ENCODE measurements at regions of chr7 and their contacts with region 1.

Region 1: DNA sequence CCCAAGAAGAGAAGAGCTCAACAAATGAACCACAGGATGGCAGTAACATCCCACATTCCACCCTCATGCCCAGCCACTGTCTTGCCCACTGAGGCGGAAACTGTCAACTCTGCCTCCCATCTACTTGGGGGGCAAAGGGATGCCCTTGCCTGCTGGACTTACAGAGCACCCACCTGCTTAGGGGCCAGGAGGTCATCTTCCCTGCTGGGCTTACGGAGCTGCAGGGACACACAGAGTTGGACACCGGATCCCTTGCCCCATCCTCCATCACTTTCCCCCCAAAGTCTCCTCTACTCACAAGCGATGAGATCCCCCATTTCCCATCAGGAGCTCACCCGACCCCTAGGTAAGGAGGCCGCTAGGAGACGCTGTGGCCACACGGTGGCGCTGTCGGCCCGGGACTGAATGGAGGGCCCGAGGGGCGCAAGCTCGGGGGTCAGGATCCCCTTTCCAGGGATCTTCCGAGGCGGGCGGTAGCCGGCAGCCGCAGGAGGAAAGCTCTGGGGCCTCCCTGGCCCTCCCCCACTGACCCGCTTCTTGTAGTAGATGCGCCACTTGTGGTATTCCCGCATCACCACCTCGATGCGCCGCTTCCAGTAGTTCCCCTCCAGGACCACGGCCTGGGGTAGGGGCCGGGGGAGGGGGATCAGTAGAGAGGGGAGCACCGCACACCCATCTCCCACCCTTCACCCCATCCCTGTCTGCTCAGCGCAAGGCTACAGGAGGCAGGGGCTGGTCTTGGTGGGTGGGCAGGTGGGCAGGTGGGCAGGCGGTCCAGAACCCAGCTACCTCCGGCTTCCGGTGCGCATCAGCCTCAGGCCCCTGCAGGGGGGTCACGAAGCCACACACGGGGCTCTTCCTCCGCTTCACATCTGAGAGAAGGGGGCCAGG is 17.3 kb downstream of the MLXIPL start:
- DNase-seq: no peak
- ATAC-seq: peak; percentile 94
- H3K4me3 ChIP-seq: no peak overlapping the region
- H3K27ac ChIP-seq: no peak overlapping the region
- H3K4me1 ChIP-seq: no peaks in the 10 kb centered on the region
- H3K27me3 ChIP-seq: no peaks in the 10 kb centered on the region; a peak in 1 of 4 replicates
- CTCF ChIP-seq: peak; percentile 82 to 94 (median 85)
- EP300 ChIP-seq: no peak
- POLR2A ChIP-seq: no peak
- RAD21 ChIP-seq: peak; percentile 91

Region 2: GRCh38 chr7:73567846-73568685 is 39.0 kb before region 1 on chr7:
- CTCF ChIA-PET with region 1: no interaction called
- POLR2A ChIA-PET with region 1: no interaction called
- RAD21 ChIA-PET with region 1: no interaction called
- SMC1A ChIA-PET with region 1: no interaction called
- in situ Hi-C with region 1: no loop called
- intact Hi-C with region 1: no loop called
- DNase-seq: no peak
- ATAC-seq: no peak
- H3K4me3 ChIP-seq: no peak overlapping the region
- H3K27ac ChIP-seq: no peak overlapping the region
- H3K4me1 ChIP-seq: no peaks in the 10 kb centered on the region
- H3K27me3 ChIP-seq: no peaks in the 10 kb centered on the region
- CTCF ChIP-seq: no peak
- EP300 ChIP-seq: no peak
- POLR2A ChIP-seq: no peak
- RAD21 ChIP-seq: no peak

Region 3: GRCh38 chr7:73667344-73668102 is 60.5 kb after region 1 on chr7 and contains the start of gene VPS37D:
- CTCF ChIA-PET with region 1: interaction called, 12 read pairs
- POLR2A ChIA-PET with region 1: no interaction called
- RAD21 ChIA-PET with region 1: interaction called, 6 read pairs
- SMC1A ChIA-PET with region 1: interaction called, 3 read pairs
- in situ Hi-C with region 1: no loop called
- intact Hi-C with region 1: loop called (anchors 5 kb)
- DNase-seq: peak; percentile 30
- ATAC-seq: peak; percentile 99
- H3K4me3 ChIP-seq: peak within 1 kb of the TSS; percentile 51; the same call in 1 of the 2 replicates
- H3K27ac ChIP-seq: no peak within 1 kb of the TSS
- H3K4me1 ChIP-seq: no peaks in the 10 kb centered on the region
- H3K27me3 ChIP-seq: peaks cover 0 to 6% of the 10 kb centered on the region in 2 experiments; a peak in 3 of 4 replicates
- CTCF ChIP-seq: peak; percentile 75 to 86 (median 77)
- EP300 ChIP-seq: no peak
- POLR2A ChIP-seq: no peak
- RAD21 ChIP-seq: peak; percentile 66
- polyA plus RNA-seq, gene VPS37D: not detected

Region 4: DNA sequence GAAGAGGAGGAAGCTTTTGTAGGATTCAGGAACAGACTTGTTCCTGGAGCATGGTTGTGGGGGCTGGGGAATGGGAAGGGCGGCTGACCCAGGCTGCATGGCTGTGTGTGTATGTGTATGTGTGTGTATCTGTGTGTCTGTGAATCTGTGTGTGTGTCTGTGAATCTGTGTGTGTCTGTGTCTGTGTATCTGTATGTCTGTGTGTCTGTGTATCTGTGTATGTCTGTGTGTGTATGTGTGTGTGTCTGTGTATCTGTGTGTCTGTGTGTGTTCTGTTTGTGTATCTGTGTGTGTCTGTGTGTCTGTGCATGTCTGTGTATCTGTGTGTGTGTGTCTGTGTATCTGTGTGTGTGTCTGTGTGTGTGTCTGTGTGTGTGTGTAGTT is 119.0 kb after region 1 on chr7:
- CTCF ChIA-PET with region 1: interaction called, 34 read pairs
- POLR2A ChIA-PET with region 1: interaction called, 3 read pairs
- RAD21 ChIA-PET with region 1: interaction called, 12 read pairs
- SMC1A ChIA-PET with region 1: interaction called, 17 read pairs
- in situ Hi-C with region 1: loop called (anchors 5 kb)
- intact Hi-C with region 1: loop called (anchors 1 kb)
- DNase-seq: no peak
- ATAC-seq: peak; percentile 48
- H3K4me3 ChIP-seq: no peak overlapping the region
- H3K27ac ChIP-seq: no peak overlapping the region
- H3K4me1 ChIP-seq: no peaks in the 10 kb centered on the region; the same call in 1 of the 2 replicates
- H3K27me3 ChIP-seq: no peaks in the 10 kb centered on the region
- CTCF ChIP-seq: no peak
- EP300 ChIP-seq: no peak
- POLR2A ChIP-seq: no peak
- RAD21 ChIP-seq: no peak

Region 5: GRCh38 chr7:73851410-73852234 is 244.6 kb after region 1 on chr7:
- CTCF ChIA-PET with region 1: interaction called, 15 read pairs
- POLR2A ChIA-PET with region 1: no interaction called
- RAD21 ChIA-PET with region 1: interaction called, 9 read pairs
- SMC1A ChIA-PET with region 1: interaction called, 3 read pairs
- in situ Hi-C with region 1: loop called (anchors 5 kb)
- intact Hi-C with region 1: loop called (anchors 5 kb)
- DNase-seq: peak; percentile 41
- ATAC-seq: peak; percentile 91
- H3K4me3 ChIP-seq: no peak overlapping the region
- H3K27ac ChIP-seq: no peak overlapping the region
- H3K4me1 ChIP-seq: peaks cover 20% of the 10 kb centered on the region
- H3K27me3 ChIP-seq: no peaks in the 10 kb centered on the region
- CTCF ChIP-seq: no peak
- EP300 ChIP-seq: no peak
- POLR2A ChIP-seq: no peak
- RAD21 ChIP-seq: no peak

Region 6: GRCh38 chr7:74023037-74023436 is 416.0 kb after region 1 on chr7:
- CTCF ChIA-PET with region 1: no interaction called
- POLR2A ChIA-PET with region 1: no interaction called
- RAD21 ChIA-PET with region 1: no interaction called
- SMC1A ChIA-PET with region 1: no interaction called
- in situ Hi-C with region 1: no loop called
- intact Hi-C with region 1: no loop called
- DNase-seq: no peak
- ATAC-seq: no peak
- H3K4me3 ChIP-seq: no peak overlapping the region
- H3K27ac ChIP-seq: no peak overlapping the region
- H3K4me1 ChIP-seq: no peaks in the 10 kb centered on the region
- H3K27me3 ChIP-seq: peaks cover 2% of the 10 kb centered on the region in 2 experiments; a peak in 3 of 4 replicates
- CTCF ChIP-seq: no peak
- EP300 ChIP-seq: no peak
- POLR2A ChIP-seq: no peak
- RAD21 ChIP-seq: no peak

Measured in GM12878 (cell line).